ENCODE measurements at regions of chr19 and their contacts with region 1.

Region 1: GRCh38 chr19:8194528-8195267 is 14.5 kb upstream of the CERS4 start:
- DNase-seq: peak; percentile 48
- H3K4me3 Mint-ChIP-seq: peak overlapping the region; percentile 41
- H3K27ac Mint-ChIP-seq: peak overlapping the region; percentile 88
- H3K4me1 Mint-ChIP-seq: peaks cover 39% of the 10 kb centered on the region
- H3K27me3 Mint-ChIP-seq: no peaks in the 10 kb centered on the region

Region 2: DNA sequence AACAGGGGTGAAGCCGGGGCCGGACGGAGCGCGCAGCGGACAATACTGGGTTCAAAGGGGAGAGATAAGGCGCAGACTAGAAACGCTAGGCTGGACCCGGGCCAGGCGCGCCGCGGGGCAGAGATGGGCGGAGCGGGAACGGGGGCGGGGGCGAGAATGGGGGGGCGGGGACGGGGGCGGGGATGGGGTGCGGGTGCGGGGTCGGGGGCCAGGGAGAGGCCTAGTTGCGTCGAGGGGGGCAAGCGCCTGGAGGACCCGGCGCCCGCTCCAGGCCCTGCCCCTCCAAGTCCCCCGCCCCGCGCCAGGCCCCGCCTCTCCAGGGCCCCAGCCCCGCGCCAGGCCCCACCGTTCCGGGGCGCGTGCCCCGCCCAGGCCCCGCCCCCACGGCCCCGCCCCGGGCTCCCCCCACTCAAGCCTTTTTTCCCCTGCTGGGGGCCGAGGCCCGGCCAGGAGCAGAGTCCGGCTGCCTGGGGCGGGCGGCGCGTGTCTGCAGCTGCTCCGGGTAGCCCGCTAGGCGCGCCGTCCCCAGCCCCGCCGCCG is 14.3 kb after region 1 on chr19 and contains the start of gene CERS4:
- intact Hi-C with region 1: loop called (anchors 2 kb)
- DNase-seq: peak; percentile 65
- H3K4me3 Mint-ChIP-seq: peak within 1 kb of the TSS; percentile 94
- H3K27ac Mint-ChIP-seq: peak within 1 kb of the TSS; percentile 91
- H3K4me1 Mint-ChIP-seq: peaks cover 18% of the 10 kb centered on the region
- H3K27me3 Mint-ChIP-seq: peaks cover 2% of the 10 kb centered on the region
- total RNA-seq, gene CERS4: 29.1 and 30.0 TPM in 2 replicates

Region 3: DNA sequence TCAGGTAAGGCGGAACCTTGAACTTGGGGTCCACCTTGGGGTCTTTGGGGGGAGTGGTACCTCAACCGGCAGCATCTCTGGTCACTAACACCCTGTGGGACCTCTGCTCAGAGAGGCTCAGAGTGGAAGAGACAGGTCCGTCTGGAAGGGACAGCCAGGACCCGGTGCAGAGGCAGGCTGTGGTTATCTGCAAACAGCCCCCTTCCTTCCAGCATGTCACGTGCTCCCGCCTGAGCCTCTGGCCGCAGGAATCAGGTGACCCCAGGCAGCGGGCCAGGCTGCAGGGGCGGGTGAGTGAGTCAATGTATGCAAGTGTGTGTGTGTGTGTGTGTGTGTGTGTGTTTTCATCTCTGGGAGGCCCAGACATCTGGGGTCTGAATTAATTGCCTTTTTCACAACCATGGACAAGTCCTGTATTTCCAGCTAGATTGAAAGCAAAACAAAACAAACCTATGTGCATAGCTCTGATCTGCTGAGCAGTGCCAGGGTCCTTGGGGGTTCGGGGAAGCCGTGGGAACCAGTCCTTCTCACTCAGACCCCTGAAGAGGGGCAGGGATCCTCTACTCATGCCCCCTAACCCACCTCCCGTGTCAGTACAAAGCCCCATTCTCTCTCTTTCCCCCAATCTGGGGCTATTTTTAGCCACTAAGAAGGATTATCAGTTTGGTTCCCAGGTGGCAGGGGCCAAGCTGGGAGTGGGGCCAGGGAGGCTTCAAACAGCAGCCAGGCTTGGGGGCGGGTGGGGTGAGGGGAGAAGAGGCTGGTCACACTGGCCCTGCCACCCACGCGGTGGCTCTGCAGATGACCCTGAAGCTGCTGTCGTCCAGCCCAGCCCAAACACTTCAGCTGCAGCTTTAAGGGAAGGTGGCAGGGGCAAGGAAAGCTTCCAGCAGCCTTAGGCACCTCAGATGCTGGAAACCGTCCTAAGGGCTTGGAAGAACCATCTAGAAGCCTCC is 45.9 kb after region 1 on chr19:
- intact Hi-C with region 1: no loop called
- DNase-seq: peak; percentile 19
- H3K4me3 Mint-ChIP-seq: no peak overlapping the region
- H3K27ac Mint-ChIP-seq: peak overlapping the region; percentile 19
- H3K4me1 Mint-ChIP-seq: peaks cover 10% of the 10 kb centered on the region
- H3K27me3 Mint-ChIP-seq: no peaks in the 10 kb centered on the region

Region 4: GRCh38 chr19:8938576-8938975 is 743.9 kb after region 1 on chr19:
- intact Hi-C with region 1: no loop called
- DNase-seq: no peak
- H3K4me3 Mint-ChIP-seq: no peak overlapping the region
- H3K27ac Mint-ChIP-seq: no peak overlapping the region
- H3K4me1 Mint-ChIP-seq: no peaks in the 10 kb centered on the region
- H3K27me3 Mint-ChIP-seq: no peaks in the 10 kb centered on the region

Measured in activated T-helper 2 cell treated with anti-CD3 and anti-CD28 coated beads, Interferon-gamma antibody, Interleukin-2, Interleukin-4, amounts not matched to agents 10 μg/mL and 5 μg/mL and 100 μg/mL, durations not matched to agents 14 hours and 24 hours and 36 hours (primary cell).